Heart right ventricle (tissue), 16 donors: ENCODE measurements at regions of chr17 and their contacts with region 1.

Region 1: DNA sequence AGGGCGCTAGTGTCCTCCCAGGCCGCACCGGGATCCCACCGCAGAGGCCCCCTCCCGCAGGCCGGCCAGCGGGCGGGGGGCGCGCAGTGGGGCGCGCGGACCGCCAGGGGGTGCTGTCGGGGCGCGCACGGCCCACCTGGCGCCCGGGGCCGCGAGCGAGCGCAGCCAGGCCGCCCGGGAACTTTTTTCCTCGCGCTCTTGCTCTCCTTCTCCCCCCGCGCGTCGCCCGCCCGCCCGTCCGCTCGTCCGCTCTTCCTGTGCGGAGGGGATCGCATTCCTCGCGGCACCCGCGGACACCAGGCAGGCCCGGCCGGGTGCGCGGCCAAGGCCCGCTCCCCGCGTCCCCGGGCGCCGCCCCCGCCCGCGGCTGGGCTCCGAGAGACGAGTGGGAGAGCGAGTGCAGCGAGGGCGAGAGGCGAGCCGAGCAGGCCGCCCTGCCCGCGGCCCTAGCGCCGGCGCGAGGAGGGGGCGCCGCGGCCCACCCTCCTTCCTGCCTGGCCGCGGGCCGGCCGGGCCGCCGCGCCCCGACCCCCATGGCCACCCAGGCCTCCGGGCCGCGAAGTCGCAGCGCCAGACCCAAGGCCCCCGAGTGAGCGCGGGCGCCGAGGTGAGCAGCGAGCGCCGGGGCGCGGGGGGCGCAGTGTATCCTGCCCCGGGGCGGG is at the start of gene RAI1:
- DNase-seq: peak; percentile 78 to 81
- ATAC-seq: peak; percentile 36 to 75 (median 68)
- H3K4me3 ChIP-seq: peak within 1 kb of the TSS; percentile 56 to 90 (median 72)
- H3K27ac ChIP-seq: peak within 1 kb of the TSS; percentile 83 to 98 (median 94)
- H3K4me1 ChIP-seq: peaks cover 22 to 47% (median 44%) of the 10 kb centered on the region in 9 donors
- H3K27me3 ChIP-seq: no peaks in the 10 kb centered on the region
- CTCF ChIP-seq: peak; percentile 55 to 99 (median 71)
- total RNA-seq, gene RAI1: 15.8 to 32.0 (median 20.9) TPM

Region 2: DNA sequence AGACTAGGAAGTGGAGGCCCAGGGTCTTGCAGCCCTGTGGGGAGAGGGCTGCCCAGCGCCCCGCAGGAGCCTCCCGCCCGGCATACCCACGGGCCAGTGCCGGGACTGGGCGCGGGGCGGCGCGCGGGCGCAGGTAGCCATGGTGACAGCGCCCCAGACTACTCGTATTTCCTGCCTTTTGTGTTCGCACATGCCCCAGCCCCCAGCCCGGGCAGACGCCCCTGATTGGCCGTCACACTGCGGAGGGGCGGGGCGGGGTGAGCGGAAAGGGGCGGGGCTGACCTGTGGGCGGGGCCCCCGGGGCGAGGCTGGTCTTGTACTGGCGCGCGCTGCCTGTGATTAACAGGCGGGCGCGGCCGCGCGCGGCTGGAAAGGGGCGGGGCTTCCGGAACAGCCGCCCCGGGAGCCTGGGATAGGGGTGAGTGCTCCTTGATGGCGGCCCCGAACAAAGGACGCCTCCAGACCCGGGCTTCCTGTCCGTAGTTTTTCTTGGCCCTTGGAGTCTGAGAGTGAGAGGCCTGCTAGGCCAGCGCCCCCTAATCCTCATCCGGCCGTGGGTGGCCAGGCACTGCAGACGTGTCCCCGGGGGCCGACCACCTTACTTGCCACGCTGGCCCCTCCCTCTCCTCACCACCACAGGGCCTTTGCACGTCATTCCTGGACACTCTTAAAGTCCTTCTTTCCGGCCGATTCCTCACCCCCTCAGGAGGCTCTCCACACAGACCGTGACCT is 70.9 kb after region 1 on chr17:
- intact Hi-C with region 1: loop called in 2 of 10 experiments (anchors 5 kb)
- DNase-seq: peak; percentile 95 to 97
- ATAC-seq: peak; percentile 87 to 94 (median 90)
- H3K4me3 ChIP-seq: peak overlapping the region in 9 of 10 donors; percentile 27 to 60 (median 50)
- H3K27ac ChIP-seq: peak overlapping the region; percentile 34 to 89 (median 82)
- H3K4me1 ChIP-seq: peaks cover 11 to 98% (median 54%) of the 10 kb centered on the region in 9 donors
- H3K27me3 ChIP-seq: no peaks in the 10 kb centered on the region
- CTCF ChIP-seq: peak in 8 of 9 donors; percentile 11 to 48 (median 38)

Region 3: GRCh38 chr17:17774009-17774881 is 92.9 kb after region 1 on chr17:
- intact Hi-C with region 1: loop called in 2 of 10 experiments (anchors 10 kb)
- DNase-seq: no peak
- ATAC-seq: peak in 4 of 8 donors; percentile 8 to 47 (median 22)
- H3K4me3 ChIP-seq: no peak overlapping the region
- H3K27ac ChIP-seq: peak overlapping the region; percentile 46 to 73 (median 68)
- H3K4me1 ChIP-seq: peaks cover 31 to 65% (median 53%) of the 10 kb centered on the region in 9 donors
- H3K27me3 ChIP-seq: no peaks in the 10 kb centered on the region
- CTCF ChIP-seq: peak in 6 of 9 donors; percentile 18 to 50 (median 33)

Region 4: GRCh38 chr17:17792551-17793377 is 111.4 kb after region 1 on chr17:
- intact Hi-C with region 1: loop called in 4 of 10 experiments (anchors 5 kb)
- DNase-seq: peak in 1 of 2 donors; percentile 63
- ATAC-seq: peak; percentile 39 to 68 (median 56)
- H3K4me3 ChIP-seq: peak overlapping the region in 3 of 10 donors; percentile 0 to 23 (median 14)
- H3K27ac ChIP-seq: peak overlapping the region in 9 of 10 donors; percentile 43 to 75 (median 59)
- H3K4me1 ChIP-seq: peaks cover 28 to 64% (median 51%) of the 10 kb centered on the region in 9 donors
- H3K27me3 ChIP-seq: no peaks in the 10 kb centered on the region
- CTCF ChIP-seq: no peak

Region 5: DNA sequence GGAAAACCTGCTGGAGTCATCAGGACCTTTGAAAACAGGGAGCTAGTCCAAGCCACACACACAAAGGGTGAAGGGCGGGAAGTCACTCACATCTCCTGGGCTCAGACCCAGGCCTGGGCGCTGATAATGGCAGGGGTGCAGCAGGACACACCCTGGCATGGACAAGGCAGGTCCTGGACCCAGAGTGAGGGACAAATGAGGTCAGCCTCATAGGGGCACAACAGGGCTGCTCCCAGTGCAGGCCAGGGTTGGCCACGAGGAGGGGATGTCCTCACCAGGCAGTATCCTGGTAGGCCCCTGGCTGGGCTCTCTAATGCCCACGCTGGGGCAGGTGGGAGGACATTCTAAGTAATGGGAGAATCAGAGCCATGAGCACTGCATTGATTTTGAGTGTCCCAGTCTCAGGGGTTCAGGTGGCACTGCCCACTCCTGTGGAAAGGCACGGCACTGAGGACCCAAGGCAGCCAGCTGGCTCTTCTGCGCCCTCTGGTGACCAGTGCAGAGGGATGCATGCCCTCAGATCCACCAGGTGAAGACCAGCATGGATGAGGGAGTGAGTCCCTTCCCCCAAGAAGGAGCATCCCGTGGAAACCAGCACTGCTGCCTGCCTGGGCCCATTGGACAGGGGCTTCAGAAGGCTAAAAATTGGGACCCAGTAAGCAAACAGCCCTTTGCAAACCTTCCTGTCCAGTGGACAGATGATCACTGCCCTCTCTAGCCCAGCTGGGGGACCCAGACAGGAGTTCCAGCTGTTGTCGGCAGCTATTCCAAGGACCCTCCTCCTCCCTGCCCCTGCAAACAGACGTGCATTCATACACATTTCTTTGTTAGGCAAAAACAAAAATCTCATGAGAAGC is 178.8 kb after region 1 on chr17:
- intact Hi-C with region 1: loop called in 9 of 10 experiments (anchors 1 to 10 kb)
- DNase-seq: peak; percentile 69 to 75
- ATAC-seq: peak; percentile 88 to 97 (median 94)
- H3K4me3 ChIP-seq: no peak overlapping the region
- H3K27ac ChIP-seq: peak overlapping the region in 7 of 10 donors; percentile 7 to 64 (median 39)
- H3K4me1 ChIP-seq: peaks cover 9 to 42% (median 15%) of the 10 kb centered on the region in 9 donors
- H3K27me3 ChIP-seq: no peaks in the 10 kb centered on the region
- CTCF ChIP-seq: peak; percentile 89 to 99 (median 97)

Region 6: DNA sequence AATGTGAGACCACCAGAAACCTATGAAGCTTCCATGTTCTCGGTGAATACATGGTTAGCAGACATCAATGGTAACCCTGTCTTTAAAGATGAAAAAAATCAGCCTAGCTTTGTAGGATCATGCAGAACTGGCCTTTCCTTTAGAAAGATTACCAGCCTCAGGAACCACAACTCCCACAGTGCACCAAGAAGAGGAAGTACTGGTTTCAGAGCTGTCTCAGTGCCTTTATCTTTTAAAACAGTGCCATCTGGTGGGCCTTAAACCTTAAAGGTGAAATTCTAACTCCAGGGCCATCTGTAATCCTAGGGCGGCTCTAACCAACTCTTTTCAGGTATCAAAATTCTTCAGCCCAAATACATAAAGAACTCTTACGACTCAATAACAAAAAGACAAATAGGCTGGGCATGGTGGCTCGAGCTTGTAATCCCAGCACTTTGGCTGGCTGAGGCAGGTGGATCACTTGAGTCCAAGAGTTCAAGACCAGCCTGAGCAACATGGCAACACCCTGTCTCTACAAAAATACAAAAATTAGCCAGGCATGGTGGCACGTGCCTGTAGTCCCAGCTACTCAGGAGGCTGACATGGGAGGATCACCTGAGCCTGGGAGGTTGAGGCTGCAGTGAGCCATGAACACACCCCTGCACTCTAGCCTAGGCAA is 352.3 kb after region 1 on chr17:
- intact Hi-C with region 1: loop called (anchors 2 to 10 kb)
- DNase-seq: peak in 1 of 2 donors; percentile 79
- ATAC-seq: peak; percentile 74 to 94 (median 88)
- H3K4me3 ChIP-seq: no peak overlapping the region
- H3K27ac ChIP-seq: peak overlapping the region in 1 of 10 donors; percentile 77
- H3K4me1 ChIP-seq: peaks cover 3 to 54% (median 39%) of the 10 kb centered on the region in 9 donors
- H3K27me3 ChIP-seq: no peaks in the 10 kb centered on the region
- CTCF ChIP-seq: peak; percentile 34 to 81 (median 65)